WTC11 (cell line): ENCODE measurements at regions of chr4 and their contacts with region 1.

Region 1: DNA sequence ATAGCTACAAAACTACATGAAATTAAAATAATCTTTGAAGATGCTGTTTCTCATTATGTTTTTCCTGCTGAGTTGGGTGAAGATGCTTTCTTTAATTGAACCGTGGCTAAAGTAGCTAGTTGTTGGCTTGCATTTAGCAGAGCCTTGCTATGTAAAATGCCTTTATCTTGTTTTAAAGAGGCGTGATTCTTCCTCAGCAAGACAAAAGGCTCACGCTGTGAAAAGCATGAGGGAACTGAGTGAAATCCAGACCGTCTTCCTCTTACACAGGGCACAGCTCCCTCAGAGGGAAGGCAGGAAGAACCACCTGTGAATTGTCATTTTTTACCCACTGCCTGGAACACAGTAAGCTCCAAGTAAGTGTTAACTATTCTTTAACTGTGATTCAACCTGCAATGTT is 39.0 kb upstream of the ZNF518B start:
- DNase-seq: peak; percentile 43
- ATAC-seq: peak; percentile 93
- H3K4me3 Mint-ChIP-seq: peak overlapping the region; percentile 50
- H3K27ac Mint-ChIP-seq: peak overlapping the region; percentile 94
- H3K4me1 Mint-ChIP-seq: peaks cover 67% of the 10 kb centered on the region
- H3K27me3 Mint-ChIP-seq: peaks cover 58% of the 10 kb centered on the region
- CTCF ChIP-seq: no peak

Region 2: GRCh38 chr4:10526429-10527222 is 30.4 kb after region 1 on chr4:
- CTCF ChIA-PET with region 1: interaction called, 16 read pairs
- POLR2A ChIA-PET with region 1: no interaction called
- DNase-seq: peak; percentile 27
- ATAC-seq: peak; percentile 92
- H3K4me3 Mint-ChIP-seq: no peak overlapping the region
- H3K27ac Mint-ChIP-seq: no peak overlapping the region
- H3K4me1 Mint-ChIP-seq: peaks cover 11% of the 10 kb centered on the region
- H3K27me3 Mint-ChIP-seq: no peaks in the 10 kb centered on the region; the same call in 1 of the 2 replicates
- CTCF ChIP-seq: no peak

Region 3: DNA sequence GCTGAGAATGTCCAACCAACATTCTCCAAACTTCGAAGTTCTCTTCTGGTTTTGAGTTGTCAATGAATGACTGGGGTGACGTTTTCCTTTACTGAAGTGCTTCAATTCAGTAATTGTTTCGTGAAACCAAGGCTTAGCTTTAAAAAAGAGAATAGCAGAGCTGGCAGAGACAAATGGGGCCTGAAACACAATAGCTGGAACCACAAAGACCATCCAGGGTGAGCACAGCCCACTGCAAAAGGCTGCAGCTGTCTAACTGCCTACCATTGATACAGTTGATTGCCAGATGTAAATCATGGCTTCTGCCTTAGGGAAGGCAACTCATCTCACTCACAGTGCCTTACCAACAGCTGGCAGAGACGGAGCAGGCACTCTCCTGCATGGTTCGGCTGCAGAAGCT is 39.7 kb after region 1 on chr4:
- CTCF ChIA-PET with region 1: interaction called, 11 read pairs
- POLR2A ChIA-PET with region 1: no interaction called
- DNase-seq: no peak
- ATAC-seq: no peak
- H3K4me3 Mint-ChIP-seq: no peak overlapping the region
- H3K27ac Mint-ChIP-seq: no peak overlapping the region
- H3K4me1 Mint-ChIP-seq: peaks cover 12% of the 10 kb centered on the region
- H3K27me3 Mint-ChIP-seq: no peaks in the 10 kb centered on the region
- CTCF ChIP-seq: no peak